ENCODE measurements at regions of chr22 and their contacts with region 1.

Region 1: GRCh38 chr22:39253435-39254070 is 8.8 kb upstream of the PDGFB start:
- DNase-seq: peak; percentile 82
- H3K4me3 Mint-ChIP-seq: peak overlapping the region; percentile 26
- H3K27ac Mint-ChIP-seq: peak overlapping the region; percentile 73
- H3K4me1 Mint-ChIP-seq: peaks cover 26% of the 10 kb centered on the region
- H3K27me3 Mint-ChIP-seq: peaks cover 8% of the 10 kb centered on the region

Region 2: DNA sequence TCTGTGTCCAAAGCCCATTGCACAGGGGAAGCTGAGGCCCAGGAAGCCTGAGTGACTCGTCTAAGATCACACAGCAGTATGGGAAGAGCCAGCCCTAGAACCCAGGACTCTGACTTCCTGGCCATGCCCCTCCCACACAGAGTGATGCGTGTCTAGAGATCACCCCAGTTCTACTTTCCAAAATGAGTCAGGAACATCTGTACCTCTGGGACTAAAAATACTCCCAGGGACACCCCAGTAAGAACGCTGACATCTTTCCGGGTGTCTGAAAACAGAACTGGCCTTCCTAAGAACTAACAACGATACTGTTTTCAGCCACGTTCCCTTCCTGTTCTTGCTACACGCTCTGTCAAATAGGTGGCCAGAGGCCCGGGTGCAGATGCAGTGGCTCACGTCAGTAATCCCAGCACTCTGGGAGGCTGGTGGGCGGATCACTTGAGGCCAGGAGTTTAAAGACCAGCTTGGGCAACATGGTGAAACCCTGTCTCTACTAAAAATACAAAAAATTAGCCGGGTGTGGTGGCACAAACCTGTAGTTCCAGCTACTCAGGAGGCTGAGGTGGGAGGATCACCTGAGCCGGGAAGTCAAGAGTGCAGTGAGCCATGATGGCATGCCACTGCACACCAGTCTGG is 13.0 kb after region 1 on chr22:
- intact Hi-C with region 1: loop called (anchors 1 kb)
- DNase-seq: peak; percentile 81
- H3K4me3 Mint-ChIP-seq: peak overlapping the region; percentile 35
- H3K27ac Mint-ChIP-seq: peak overlapping the region; percentile 88
- H3K4me1 Mint-ChIP-seq: peaks cover 21% of the 10 kb centered on the region
- H3K27me3 Mint-ChIP-seq: no peaks in the 10 kb centered on the region

Measured in activated CD4-positive, alpha-beta T cell treated with anti-CD3 and anti-CD28 coated beads, Interleukin-2, amount 10 ng/mL, durations not matched to agents 24 days and 14 days (primary cell).